Activated CD4-positive, alpha-beta T cell treated with anti-CD3 and anti-CD28 coated beads, Interleukin-2, amount 10 ng/mL, durations not matched to agents 24 days and 14 days (primary cell): ENCODE measurements at regions of chr15 and their contacts with region 1.

Region 1: DNA sequence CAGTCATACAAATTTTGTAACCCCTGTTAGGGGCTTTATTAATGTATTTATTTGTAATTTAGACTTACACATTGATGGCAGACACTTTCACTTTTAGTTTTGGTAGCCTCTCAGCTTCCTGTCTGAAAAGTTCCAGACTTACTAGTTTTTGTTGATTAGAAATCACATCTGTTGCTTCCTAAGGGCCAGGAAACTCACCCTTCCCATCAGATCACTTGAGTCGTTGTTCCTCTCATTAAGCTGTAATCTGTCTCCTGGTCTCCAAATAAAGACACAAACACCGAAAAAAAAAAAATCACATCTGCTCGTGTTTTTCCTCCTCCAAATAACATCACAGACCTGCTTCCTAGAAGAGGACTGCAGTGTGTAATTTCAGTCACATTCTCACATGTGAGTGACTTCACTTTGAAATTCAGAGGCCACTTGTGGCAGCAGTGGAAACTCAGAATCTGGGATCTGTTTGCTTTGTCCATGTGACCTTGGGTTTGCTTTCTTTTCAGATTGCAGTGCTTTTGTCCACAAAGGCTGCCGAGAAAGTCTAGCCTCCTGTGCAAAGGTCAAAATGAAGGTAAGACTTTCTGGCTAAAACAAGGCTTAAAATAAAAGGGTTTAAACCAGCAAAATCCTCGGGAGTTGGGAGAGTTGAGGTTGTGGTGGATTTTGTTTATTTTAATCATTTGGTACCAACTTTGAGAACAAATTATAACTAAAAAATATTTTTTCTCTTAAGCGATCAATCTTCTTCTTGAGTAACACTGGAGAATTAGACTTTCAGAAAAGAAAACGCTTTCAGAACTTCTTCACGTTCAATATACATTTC is 87.0 kb downstream of the KLHL25 start:
- DNase-seq: peak; percentile 75
- H3K4me3 Mint-ChIP-seq: peak overlapping the region; percentile 86
- H3K27ac Mint-ChIP-seq: peak overlapping the region; percentile 99
- H3K4me1 Mint-ChIP-seq: peaks cover 70% of the 10 kb centered on the region
- H3K27me3 Mint-ChIP-seq: no peaks in the 10 kb centered on the region

Region 2: GRCh38 chr15:85330901-85331588 is 376.7 kb before region 1 on chr15:
- intact Hi-C with region 1: loop called (anchors 5 kb)
- DNase-seq: peak; percentile 92
- H3K4me3 Mint-ChIP-seq: peak overlapping the region; percentile 90
- H3K27ac Mint-ChIP-seq: peak overlapping the region; percentile 94
- H3K4me1 Mint-ChIP-seq: peaks cover 44% of the 10 kb centered on the region
- H3K27me3 Mint-ChIP-seq: no peaks in the 10 kb centered on the region

Region 3: DNA sequence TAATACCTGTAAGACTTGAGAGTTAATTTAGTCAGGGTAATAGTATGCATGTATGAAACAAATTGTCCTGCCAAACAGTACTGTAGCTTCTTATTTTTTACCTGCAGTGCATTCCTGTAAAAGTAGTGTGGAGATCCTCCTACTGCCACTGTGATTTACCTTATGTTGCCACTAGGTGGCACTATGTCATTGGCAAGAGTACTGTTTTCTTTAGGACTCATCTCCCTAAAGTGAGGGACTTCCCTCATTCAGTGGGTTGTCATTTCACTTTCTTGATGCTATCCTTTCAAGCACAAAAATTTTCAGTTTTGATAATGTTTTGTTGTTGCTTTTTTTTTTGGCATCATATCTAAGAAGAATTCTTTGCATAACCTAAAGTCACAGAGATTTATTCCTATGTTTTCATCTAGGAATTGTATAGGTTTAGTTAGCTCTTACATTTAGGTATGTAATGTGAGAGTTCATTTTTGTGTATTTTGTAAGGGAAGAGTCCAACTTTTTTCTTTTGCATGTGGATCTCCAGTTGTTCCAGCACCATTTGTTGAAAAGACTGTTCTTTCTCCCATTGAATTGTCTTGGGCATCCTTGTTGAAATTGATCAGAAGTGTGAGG is 221.7 kb before region 1 on chr15:
- intact Hi-C with region 1: loop called (anchors 5 kb)
- DNase-seq: peak; percentile 92
- H3K4me3 Mint-ChIP-seq: no peak overlapping the region
- H3K27ac Mint-ChIP-seq: no peak overlapping the region
- H3K4me1 Mint-ChIP-seq: peaks cover 41% of the 10 kb centered on the region
- H3K27me3 Mint-ChIP-seq: no peaks in the 10 kb centered on the region

Region 4: GRCh38 chr15:85543741-85544155 is 164.0 kb before region 1 on chr15:
- intact Hi-C with region 1: loop called (anchors 1 kb)
- DNase-seq: peak; percentile 82
- H3K4me3 Mint-ChIP-seq: peak overlapping the region; percentile 74
- H3K27ac Mint-ChIP-seq: peak overlapping the region; percentile 64
- H3K4me1 Mint-ChIP-seq: peaks cover 75% of the 10 kb centered on the region
- H3K27me3 Mint-ChIP-seq: no peaks in the 10 kb centered on the region

Region 5: DNA sequence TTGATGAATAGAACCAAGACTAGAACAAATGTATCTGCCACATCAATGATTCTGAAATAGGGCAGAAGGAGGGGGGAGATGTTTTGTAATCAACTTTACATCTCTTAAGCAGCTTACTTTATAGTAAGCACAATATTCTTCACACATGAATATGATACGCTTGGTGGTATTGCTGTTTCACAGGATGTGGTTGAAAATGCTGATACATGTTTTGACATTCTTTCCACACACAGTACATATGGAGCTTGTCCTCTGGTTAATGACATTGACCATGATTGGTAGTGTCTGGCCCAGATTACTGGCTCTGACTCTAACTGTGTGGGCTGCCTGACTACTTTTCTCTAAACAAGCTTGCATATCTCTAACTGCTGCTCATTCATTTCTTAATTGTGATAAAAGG is 81.9 kb before region 1 on chr15:
- intact Hi-C with region 1: loop called (anchors 1 kb)
- DNase-seq: peak; percentile 76
- H3K4me3 Mint-ChIP-seq: peak overlapping the region; percentile 62
- H3K27ac Mint-ChIP-seq: peak overlapping the region; percentile 88
- H3K4me1 Mint-ChIP-seq: peaks cover 64% of the 10 kb centered on the region
- H3K27me3 Mint-ChIP-seq: no peaks in the 10 kb centered on the region

Region 6: DNA sequence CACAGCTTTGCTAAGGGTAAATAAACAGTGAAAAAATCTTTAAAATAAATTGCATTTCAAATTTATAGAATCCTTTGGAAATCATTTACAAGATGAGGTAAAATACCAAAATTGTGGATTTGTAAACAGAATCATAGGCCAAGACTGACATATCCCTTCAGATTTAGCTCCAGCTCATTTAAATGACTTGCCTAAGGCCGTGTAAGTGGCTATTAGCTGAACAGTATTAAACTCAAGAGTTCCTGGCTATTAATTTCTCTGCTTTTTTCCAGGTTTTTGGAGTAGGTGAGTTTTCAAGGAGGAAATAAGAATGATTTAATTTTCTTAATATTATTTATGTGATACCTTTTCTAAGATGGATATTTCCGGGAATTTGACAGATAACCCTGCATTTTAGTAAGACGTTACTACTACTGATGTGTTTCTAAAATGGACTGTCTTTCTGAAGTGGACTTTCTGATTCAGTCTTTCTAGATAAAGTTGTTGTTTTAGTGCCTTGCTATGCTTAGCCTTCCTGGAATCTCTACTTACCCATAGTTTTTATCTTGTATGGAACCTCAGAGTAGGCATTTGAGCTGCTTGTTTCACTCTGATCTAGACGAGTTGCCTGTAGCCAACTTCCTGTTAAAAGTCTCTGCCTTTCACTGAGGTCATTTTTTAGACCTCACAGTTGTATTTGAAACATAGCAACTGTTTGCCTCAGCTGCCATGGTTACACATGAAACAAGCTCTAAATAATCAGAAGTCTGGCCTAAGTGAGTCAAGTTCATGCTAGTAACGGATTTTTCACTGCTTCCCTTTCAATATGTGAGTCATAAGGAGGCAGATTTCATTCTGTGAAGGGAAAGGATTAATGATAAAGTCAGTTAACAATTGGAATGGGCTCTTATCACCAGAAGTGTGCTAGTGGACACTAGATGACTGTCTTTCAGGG is 40.0 kb before region 1 on chr15:
- intact Hi-C with region 1: loop called (anchors 1 kb)
- DNase-seq: peak; percentile 89
- H3K4me3 Mint-ChIP-seq: peak overlapping the region; percentile 47
- H3K27ac Mint-ChIP-seq: peak overlapping the region; percentile 95
- H3K4me1 Mint-ChIP-seq: peaks cover 23% of the 10 kb centered on the region
- H3K27me3 Mint-ChIP-seq: no peaks in the 10 kb centered on the region

Region 7: DNA sequence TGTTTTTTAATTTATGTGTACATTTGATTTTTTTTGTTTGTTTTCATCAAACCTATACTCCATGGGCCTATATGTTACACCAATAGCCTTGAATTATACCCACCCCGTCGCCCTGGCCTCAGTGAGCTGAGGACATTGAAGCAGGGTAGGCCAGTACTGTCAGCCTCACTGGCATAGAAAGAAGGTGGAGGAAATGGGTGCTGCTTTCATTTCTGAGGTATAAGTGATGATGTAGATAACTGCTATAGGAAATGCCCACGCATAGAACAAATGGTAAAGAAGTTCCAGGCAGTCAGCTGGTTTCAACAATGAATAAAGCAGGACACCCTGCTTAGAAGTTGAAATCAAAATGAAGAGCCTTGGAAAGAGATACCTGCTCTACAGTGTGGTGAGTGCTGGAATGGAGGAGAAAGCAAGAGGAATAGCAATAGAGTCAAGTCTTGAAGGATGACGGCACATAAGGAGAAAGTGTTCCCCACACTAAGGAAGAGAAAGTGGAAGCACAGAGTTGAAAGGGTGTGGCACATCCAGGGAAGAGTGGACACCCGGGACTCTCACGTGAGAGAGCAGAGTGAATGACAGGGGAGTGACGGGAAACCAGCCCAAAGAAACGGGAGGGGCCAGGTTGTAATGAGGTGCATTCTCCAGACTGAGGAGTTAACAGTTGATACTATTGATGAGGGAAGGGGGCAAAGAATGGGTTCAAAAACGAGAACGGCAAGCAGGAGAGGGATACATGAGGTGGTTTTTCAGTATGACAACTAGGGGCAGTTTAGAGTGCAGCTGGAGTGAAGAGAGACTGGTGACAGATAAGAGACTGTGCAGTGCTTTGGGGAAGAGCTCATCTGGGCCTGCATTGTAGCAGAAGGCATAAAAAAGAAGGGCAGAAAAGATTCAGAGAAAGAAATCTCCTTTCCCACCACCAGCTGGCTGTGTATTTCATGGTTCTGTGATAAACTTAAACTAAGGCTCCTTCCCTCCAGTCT is 16.5 kb after region 1 on chr15:
- intact Hi-C with region 1: loop called (anchors 2 kb)
- DNase-seq: peak; percentile 67
- H3K4me3 Mint-ChIP-seq: peak overlapping the region; percentile 67
- H3K27ac Mint-ChIP-seq: peak overlapping the region; percentile 90
- H3K4me1 Mint-ChIP-seq: peaks cover 30% of the 10 kb centered on the region
- H3K27me3 Mint-ChIP-seq: no peaks in the 10 kb centered on the region

Region 8: GRCh38 chr15:85771781-85772445 is 64.2 kb after region 1 on chr15:
- intact Hi-C with region 1: no loop called
- DNase-seq: no peak
- H3K4me3 Mint-ChIP-seq: no peak overlapping the region
- H3K27ac Mint-ChIP-seq: no peak overlapping the region
- H3K4me1 Mint-ChIP-seq: no peaks in the 10 kb centered on the region
- H3K27me3 Mint-ChIP-seq: no peaks in the 10 kb centered on the region